OCI-LY7 (cell line): ENCODE measurements at regions of chr2 and their contacts with region 1.

Region 1: GRCh38 chr2:224160917-224161316 is 121.8 kb upstream of the SERPINE2 start:
- DNase-seq: no peak
- H3K4me3 ChIP-seq: no peak overlapping the region
- H3K27ac ChIP-seq: no peak overlapping the region
- H3K4me1 ChIP-seq: no peaks in the 10 kb centered on the region
- CTCF ChIP-seq: no peak

Region 2: DNA sequence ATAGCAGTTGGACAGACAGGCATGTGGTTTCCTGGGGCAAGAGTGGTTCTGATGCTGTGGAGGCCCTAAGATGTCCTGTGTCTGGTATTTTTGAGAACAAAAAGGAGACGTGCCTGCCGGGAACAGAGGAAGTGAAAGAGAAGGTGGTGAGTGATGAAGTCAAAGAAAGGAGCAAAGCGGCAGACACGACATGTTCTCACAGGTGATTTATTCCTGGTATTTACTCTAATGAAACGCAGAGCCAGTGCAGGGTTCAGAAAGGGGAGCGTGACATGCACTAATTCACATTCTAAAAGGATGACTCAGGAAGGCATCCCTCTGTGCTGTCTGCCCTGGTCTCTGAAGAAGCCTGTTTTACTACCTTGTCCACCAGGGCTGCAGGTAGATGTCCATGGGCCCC is 898.0 kb before region 1 on chr2:
- CTCF ChIA-PET with region 1: no interaction called
- POLR2A ChIA-PET with region 1: interaction called, 11 read pairs
- intact Hi-C with region 1: no loop called
- DNase-seq: no peak
- H3K4me3 ChIP-seq: no peak overlapping the region
- H3K27ac ChIP-seq: no peak overlapping the region
- H3K4me1 ChIP-seq: no peaks in the 10 kb centered on the region
- CTCF ChIP-seq: no peak

Region 3: GRCh38 chr2:223338016-223338415 is 822.9 kb before region 1 on chr2:
- CTCF ChIA-PET with region 1: no interaction called
- POLR2A ChIA-PET with region 1: no interaction called
- intact Hi-C with region 1: no loop called
- DNase-seq: no peak
- H3K4me3 ChIP-seq: no peak overlapping the region
- H3K27ac ChIP-seq: no peak overlapping the region
- H3K4me1 ChIP-seq: no peaks in the 10 kb centered on the region
- CTCF ChIP-seq: no peak

Region 4: GRCh38 chr2:223513771-223514455 is 647.0 kb before region 1 on chr2:
- CTCF ChIA-PET with region 1: no interaction called
- POLR2A ChIA-PET with region 1: no interaction called
- intact Hi-C with region 1: no loop called
- DNase-seq: no peak
- H3K4me3 ChIP-seq: no peak overlapping the region
- H3K27ac ChIP-seq: no peak overlapping the region
- H3K4me1 ChIP-seq: no peaks in the 10 kb centered on the region
- CTCF ChIP-seq: no peak